Thyroid gland (tissue), 4 donors: ENCODE measurements at regions of chr12 and their contacts with region 1.

Region 1: DNA sequence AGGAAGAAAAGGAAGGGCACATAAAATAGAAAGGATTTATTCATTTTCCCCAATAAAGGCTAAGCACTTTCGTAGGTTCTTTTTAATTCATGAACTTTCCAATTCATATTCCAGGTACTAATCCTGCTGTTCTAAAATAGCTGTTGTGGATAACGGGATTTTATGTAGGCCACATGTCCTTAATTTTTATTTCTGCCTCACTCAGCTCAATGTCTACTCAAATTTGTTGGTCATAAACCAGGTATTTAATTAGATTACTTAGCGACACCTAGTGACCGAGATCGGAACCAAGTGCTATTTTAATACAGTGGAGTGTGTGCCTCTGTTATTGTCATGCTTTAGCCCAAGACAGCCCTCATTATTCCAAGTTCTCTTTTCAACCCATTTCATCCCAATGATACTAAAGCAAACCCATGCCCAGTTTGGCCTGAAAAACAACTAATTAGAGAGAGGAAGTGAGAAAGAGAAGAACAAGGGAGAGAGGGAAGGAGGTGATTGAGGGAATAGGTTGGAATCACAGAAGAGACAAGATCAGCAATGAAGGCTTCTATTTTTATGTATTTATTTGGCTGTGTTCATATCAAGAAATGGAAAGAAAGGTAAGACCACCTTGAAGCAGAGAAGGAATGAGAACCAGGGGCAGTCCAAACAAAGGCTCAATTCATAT is 45.9 kb upstream of the IFNG-AS1 start:
- DNase-seq: peak; percentile 69 to 70
- H3K4me3 ChIP-seq: no peak overlapping the region
- H3K27ac ChIP-seq: no peak overlapping the region
- H3K4me1 ChIP-seq: no peaks in the 10 kb centered on the region
- H3K27me3 ChIP-seq: no peaks in the 10 kb centered on the region
- CTCF ChIP-seq: peak; percentile 39 to 87 (median 71)
- POLR2A ChIP-seq: no peak

Region 2: GRCh38 chr12:67355578-67356379 is 587.6 kb before region 1 on chr12:
- intact Hi-C with region 1: loop called (anchors 5 kb)
- DNase-seq: peak; percentile 31 to 35
- H3K4me3 ChIP-seq: no peak overlapping the region
- H3K27ac ChIP-seq: peak overlapping the region; percentile 77 to 83 (median 81)
- H3K4me1 ChIP-seq: peaks cover 29 to 54% of the 10 kb centered on the region in 2 donors
- H3K27me3 ChIP-seq: no peaks in the 10 kb centered on the region
- CTCF ChIP-seq: peak in 5 of 6 experiments; percentile 18 to 84 (median 49)
- POLR2A ChIP-seq: no peak